ENCODE measurements at regions of chr2 and their contacts with region 1.

Region 1: DNA sequence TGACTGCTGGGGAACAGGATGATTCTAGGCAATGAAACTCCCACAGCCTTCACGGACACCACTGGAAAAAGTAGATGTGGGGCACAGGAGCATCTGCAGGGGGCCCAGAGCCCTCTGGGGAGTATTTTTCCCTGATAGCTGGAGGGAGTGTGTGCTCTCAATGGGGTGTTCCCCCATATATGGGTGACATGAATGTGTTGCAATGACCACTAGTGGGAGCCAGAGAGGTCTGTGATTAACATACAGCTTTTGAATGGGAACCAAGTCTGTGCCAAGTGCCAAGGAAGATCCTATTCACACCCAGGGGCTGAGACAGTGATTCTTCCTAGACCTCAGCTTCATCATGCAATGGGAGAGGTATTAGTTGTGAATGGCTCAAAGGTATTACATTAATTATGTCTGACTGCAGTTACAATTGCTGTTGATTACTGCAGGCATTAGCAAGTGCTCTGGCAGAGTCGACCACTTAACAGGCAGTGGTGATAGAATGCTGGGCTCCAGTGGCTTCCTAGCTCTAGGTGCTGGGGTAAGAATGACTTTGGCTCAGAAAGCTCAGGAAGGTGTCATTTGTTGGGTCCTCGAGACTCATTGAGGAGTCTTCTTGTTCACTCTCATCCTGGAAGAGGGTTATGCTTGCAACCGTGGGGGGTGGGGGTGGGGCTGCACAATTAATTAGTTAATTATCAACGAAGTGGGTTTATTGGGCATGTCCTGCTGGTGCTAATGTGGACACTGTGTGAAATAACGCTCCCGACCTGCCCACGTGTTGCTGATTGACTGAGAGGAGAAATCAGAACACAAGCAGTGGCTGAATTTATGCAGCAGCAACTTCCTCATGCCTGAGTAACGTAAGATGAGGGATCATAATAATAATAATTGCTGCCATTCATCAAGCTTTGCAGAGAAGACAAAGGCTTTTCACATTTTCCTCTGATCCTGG is 194.1 kb downstream of the CLIP4 start:
- DNase-seq: peak; percentile 76
- H3K4me3 Mint-ChIP-seq: no peak overlapping the region
- H3K27ac Mint-ChIP-seq: no peak overlapping the region
- H3K4me1 Mint-ChIP-seq: peaks cover 13% of the 10 kb centered on the region
- H3K27me3 Mint-ChIP-seq: peaks cover 33% of the 10 kb centered on the region

Region 2: DNA sequence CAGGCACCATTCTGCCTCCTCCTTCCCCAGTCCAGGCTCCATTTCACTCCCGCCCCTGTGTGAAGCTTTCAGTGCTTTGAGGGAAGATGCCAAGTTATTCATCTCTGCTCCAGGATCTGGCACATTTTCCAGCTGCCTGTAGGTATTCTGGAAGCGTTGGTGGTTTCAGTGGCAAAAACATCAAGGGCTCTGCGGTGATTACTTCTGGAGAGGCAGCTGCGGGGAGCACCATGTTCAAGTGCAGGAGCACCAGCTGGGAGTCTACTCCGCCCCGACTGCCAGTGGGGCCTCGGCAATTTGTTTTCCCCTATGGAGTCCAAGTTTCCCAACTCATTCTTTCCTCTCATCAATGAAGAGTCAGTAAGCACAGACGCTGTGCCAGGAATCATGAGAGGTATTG is 17.6 kb after region 1 on chr2:
- CTCF ChIA-PET with region 1: interaction called, 13 read pairs
- POLR2A ChIA-PET with region 1: no interaction called
- DNase-seq: no peak
- H3K4me3 Mint-ChIP-seq: no peak overlapping the region
- H3K27ac Mint-ChIP-seq: no peak overlapping the region
- H3K4me1 Mint-ChIP-seq: peaks cover 18% of the 10 kb centered on the region
- H3K27me3 Mint-ChIP-seq: peaks cover 7% of the 10 kb centered on the region